Aorta (tissue), 5 donors: ENCODE measurements at regions of chr19 and their contacts with region 1.

Region 1: DNA sequence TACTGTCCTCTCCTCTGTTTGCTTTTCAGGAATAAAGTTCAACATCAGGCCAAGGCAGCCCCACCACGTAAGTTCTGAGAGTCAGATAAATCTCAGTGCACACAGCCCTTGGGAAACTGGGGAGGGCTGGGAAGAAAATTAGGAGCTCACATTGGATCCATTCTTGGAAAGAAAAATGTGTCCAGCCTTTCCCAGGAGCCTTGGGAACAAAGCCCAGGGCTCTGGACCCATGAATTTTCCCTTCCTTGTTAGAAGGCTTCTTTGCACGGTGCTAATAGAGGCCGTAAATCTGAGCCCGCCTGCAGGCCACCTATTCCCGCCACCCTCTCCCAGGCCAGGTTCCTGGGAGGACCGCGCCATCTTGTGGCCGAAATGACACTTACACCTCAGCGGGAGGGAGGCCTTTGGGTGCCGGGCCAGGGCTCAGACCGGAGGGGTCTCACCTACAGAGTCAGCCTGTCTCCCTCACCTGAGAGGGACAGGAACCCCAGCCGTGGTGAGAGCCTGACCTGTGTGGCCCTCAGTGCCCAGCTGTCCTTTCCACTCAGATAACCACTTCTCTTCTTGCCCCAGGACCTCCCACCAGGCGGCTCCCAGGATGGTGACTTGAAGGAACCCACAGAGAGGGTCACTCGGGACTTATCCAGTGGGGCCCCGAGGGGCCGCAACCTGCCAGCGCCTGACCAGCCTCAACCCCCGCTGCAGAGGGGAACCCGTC is 25.1 kb upstream of the KCTD15 start:
- DNase-seq: peak; percentile 73 to 89
- ATAC-seq: peak; percentile 51
- H3K4me3 ChIP-seq: no peak overlapping the region
- H3K27ac ChIP-seq: no peak overlapping the region
- H3K4me1 ChIP-seq: no peaks in the 10 kb centered on the region
- H3K27me3 ChIP-seq: no peaks in the 10 kb centered on the region

Region 2: DNA sequence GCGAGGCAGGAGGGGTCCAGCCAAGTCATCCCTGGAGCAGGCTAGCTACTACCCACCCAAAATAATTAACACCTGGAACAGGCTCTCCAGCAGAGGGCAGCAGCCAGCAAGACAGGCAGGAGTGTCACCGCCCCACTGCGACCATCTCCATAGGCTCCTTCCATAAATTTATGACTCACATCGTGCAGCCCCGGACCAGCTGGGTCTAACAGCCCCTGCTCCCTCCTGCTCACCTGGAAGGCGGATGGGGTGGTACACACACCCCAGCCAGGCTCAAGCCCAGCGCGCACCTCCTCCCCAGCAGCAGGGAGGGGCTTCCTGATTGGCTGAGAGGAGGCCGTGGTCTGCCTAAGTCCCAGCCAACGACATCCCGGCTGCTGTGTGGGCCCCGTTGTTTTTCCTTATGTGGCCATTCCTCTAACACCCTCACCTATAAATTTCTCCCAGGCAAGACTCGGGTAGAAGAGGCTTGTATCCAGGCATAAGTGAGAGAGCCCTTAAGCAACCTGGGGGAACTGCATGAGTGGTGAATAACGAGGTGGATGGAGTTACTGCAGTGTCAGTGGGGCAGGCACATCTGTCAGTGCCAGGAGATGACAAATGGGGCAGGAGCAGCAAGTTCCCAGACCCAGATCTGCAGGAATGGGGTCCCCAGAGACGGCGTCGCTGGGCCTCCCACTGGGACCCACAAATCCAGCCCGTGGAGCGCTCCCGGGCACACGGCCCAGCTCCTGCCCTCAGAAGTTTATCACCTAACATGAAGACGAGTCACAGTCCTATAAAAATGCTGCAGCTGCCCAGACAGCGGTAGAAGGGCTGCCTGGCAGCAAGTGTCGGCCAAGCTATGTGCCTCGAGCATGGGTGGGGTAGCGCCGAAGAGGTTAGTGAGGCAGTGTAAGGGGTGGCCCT is 355.0 kb before region 1 on chr19:
- intact Hi-C with region 1: loop called in 1 of 2 experiments (anchors 5 kb)
- DNase-seq: no peak
- ATAC-seq: no peak
- H3K4me3 ChIP-seq: no peak overlapping the region
- H3K27ac ChIP-seq: no peak overlapping the region
- H3K4me1 ChIP-seq: no peaks in the 10 kb centered on the region
- H3K27me3 ChIP-seq: no peaks in the 10 kb centered on the region

Region 3: DNA sequence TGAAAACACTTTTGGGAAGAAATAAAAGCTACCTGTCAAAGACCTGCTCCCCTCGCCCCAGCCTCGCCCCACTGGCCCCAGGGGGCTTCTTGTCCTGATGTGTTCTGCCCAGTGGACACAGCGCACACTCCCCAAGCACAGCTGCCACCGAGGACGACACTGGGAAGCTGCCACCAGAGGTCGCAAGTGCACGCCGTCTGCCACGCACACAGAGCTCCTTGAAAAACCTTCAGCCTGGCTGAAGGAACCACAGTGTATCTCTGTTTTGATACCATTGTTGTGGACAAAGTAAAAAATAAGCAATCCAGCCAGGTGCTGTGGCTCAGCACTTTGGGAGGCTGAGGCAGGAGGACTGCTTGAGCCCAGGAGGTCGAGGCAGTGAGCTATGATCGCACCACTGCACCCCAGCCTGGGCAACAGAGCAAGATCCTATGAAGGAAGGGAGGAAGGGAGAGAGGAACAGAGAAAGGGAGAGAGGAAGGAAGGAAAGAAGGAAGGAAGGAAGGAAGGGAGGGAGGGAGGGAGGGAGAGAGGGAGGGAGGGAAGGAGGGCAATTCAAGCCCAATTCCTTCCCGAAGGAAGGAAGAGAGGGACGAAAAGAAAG is 340.8 kb before region 1 on chr19:
- intact Hi-C with region 1: loop called (anchors 1 to 5 kb)
- DNase-seq: peak; percentile 77 to 89
- ATAC-seq: no peak
- H3K4me3 ChIP-seq: no peak overlapping the region
- H3K27ac ChIP-seq: no peak overlapping the region
- H3K4me1 ChIP-seq: no peaks in the 10 kb centered on the region
- H3K27me3 ChIP-seq: no peaks in the 10 kb centered on the region

Region 4: GRCh38 chr19:33804021-33804799 is 32.7 kb after region 1 on chr19:
- intact Hi-C with region 1: no loop called
- DNase-seq: peak; percentile 82 to 90
- ATAC-seq: peak; percentile 82
- H3K4me3 ChIP-seq: no peak overlapping the region
- H3K27ac ChIP-seq: no peak overlapping the region
- H3K4me1 ChIP-seq: no peaks in the 10 kb centered on the region
- H3K27me3 ChIP-seq: no peaks in the 10 kb centered on the region